Caco-2 (cell line): ENCODE measurements at regions of chr10 and their contacts with region 1.

Region 1: DNA sequence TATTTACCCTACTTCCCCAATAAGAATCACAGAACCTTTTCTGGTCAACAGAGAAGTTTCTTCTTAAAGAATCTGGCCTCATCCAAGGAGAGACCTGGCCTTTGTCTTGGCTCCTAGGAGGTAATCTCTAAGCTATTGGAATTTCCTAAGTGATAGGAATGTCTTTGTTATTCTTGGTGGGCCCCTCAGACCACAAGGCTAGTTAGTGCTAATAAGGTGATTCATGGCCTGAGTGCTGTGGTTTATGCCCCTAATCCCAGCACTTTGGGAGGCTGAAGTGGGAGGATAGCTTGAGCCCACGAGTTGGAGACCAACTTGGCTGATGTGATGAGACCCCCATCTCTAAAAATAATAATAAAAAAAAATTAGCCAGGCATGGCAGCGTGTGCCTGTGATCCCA is 60.0 kb upstream of the CYP2C18 start:
- DNase-seq: peak; percentile 42 to 56
- H3K4me3 ChIP-seq: no peak overlapping the region
- H3K4me3 Mint-ChIP-seq: no peak overlapping the region
- H3K27ac Mint-ChIP-seq: peak overlapping the region; percentile 94
- H3K4me1 ChIP-seq: peaks cover 71% of the 10 kb centered on the region
- H3K4me1 Mint-ChIP-seq: peaks cover 38% of the 10 kb centered on the region
- H3K27me3 ChIP-seq: no peaks in the 10 kb centered on the region
- H3K27me3 Mint-ChIP-seq: no peaks in the 10 kb centered on the region
- CTCF ChIP-seq: no peak

Region 2: DNA sequence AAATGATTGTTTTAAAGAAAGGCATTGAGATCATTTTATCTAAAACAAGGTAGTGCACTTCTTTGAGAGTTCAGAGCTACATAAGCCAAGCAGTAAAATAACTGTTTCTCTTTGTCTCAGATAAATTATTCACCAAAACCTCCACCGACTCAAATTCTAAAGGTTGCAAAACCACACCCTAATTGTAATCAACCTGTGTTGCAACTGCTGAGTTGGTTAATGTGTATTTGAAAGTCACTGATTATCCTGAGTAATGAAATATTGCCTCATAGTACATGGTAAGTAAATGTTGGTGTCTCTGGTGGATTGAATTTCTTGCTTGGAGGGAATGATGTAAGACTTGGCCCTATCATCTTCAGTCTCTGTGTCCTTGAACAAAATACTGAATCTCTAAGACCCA is 279.0 kb after region 1 on chr10:
- CTCF ChIA-PET with region 1: no interaction called
- POLR2A ChIA-PET with region 1: no interaction called
- intact Hi-C with region 1: loop called (anchors 10 kb)
- DNase-seq: peak in 1 of 2 experiments; percentile 63
- H3K4me3 ChIP-seq: no peak overlapping the region
- H3K4me3 Mint-ChIP-seq: no peak overlapping the region
- H3K27ac Mint-ChIP-seq: no peak overlapping the region
- H3K4me1 ChIP-seq: peaks cover 18% of the 10 kb centered on the region
- H3K4me1 Mint-ChIP-seq: peaks cover 8% of the 10 kb centered on the region
- H3K27me3 ChIP-seq: no peaks in the 10 kb centered on the region
- H3K27me3 Mint-ChIP-seq: no peaks in the 10 kb centered on the region
- CTCF ChIP-seq: no peak

Region 3: DNA sequence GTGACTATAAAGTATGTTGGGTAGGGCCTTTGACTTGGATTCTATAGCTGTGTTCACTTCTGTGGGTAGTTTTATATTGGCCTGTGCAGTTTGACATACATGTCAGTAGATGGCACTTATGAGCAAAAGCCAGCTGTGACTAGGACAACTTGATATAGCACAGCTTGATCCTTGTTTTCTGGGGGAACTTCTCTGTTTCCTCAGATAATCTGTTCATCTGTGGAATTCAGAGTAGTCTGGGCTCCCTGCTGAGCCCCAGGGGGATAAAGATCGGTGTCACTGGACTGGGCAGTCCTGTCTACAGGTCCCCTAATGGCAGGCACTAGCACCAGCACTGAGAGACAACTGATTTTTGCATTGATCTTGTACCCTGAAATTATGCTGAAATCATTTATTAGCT is 340.3 kb after region 1 on chr10:
- CTCF ChIA-PET with region 1: no interaction called
- POLR2A ChIA-PET with region 1: no interaction called
- intact Hi-C with region 1: loop called (anchors 5 kb)
- DNase-seq: peak; percentile 53 to 54
- H3K4me3 ChIP-seq: no peak overlapping the region
- H3K4me3 Mint-ChIP-seq: no peak overlapping the region
- H3K27ac Mint-ChIP-seq: no peak overlapping the region
- H3K4me1 ChIP-seq: no peaks in the 10 kb centered on the region
- H3K4me1 Mint-ChIP-seq: no peaks in the 10 kb centered on the region
- H3K27me3 ChIP-seq: no peaks in the 10 kb centered on the region
- H3K27me3 Mint-ChIP-seq: no peaks in the 10 kb centered on the region
- CTCF ChIP-seq: peak; percentile 73 to 77

Region 4: GRCh38 chr10:95133016-95133752 is 509.6 kb after region 1 on chr10:
- CTCF ChIA-PET with region 1: no interaction called
- POLR2A ChIA-PET with region 1: no interaction called
- intact Hi-C with region 1: loop called (anchors 5 kb)
- DNase-seq: peak; percentile 86 to 89
- H3K4me3 ChIP-seq: no peak overlapping the region
- H3K4me3 Mint-ChIP-seq: no peak overlapping the region
- H3K27ac Mint-ChIP-seq: peak overlapping the region; percentile 53
- H3K4me1 ChIP-seq: peaks cover 22% of the 10 kb centered on the region
- H3K4me1 Mint-ChIP-seq: peaks cover 22% of the 10 kb centered on the region
- H3K27me3 ChIP-seq: no peaks in the 10 kb centered on the region
- H3K27me3 Mint-ChIP-seq: no peaks in the 10 kb centered on the region
- CTCF ChIP-seq: peak; percentile 77 to 94

Region 5: DNA sequence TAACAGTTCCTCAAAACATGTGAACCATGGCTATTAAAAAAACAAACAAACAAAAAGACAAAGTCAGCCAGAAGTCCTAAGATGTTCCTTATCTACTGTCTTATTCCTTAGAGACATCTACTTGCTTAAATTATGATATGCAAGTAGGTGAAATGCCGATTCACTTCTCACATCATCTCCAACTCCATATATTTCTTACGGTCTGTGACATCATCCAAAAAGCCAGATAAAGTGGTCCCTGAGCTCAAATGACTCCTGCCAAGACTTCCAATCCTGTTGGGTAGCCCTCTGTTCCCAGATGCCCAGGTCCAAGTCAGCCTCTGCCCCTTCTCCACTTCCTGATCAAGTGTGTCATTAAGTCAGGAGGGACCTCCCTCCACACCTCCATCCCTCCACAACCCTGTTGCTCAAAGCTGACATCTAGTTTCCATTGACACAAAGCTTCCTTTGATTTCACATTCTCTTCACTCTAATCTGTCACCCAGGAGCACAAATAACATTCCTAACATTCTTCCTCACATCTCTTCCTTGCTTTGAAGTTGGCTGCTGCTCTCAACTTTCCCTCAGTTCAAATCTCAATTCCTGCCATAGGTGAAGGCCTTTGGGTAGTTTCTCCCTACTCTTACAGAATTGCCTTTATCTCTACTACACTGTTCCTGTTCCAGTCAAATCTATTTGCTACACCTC is 723.3 kb after region 1 on chr10:
- CTCF ChIA-PET with region 1: no interaction called
- POLR2A ChIA-PET with region 1: no interaction called
- intact Hi-C with region 1: loop called (anchors 5 kb)
- DNase-seq: peak; percentile 87 to 89
- H3K4me3 ChIP-seq: no peak overlapping the region
- H3K4me3 Mint-ChIP-seq: peak overlapping the region; percentile 57
- H3K27ac Mint-ChIP-seq: peak overlapping the region; percentile 93
- H3K4me1 ChIP-seq: peaks cover 66% of the 10 kb centered on the region
- H3K4me1 Mint-ChIP-seq: peaks cover 45% of the 10 kb centered on the region
- H3K27me3 ChIP-seq: no peaks in the 10 kb centered on the region
- H3K27me3 Mint-ChIP-seq: no peaks in the 10 kb centered on the region
- CTCF ChIP-seq: no peak